ENCODE measurements at regions of chr13 and their contacts with region 1.

Region 1: DNA sequence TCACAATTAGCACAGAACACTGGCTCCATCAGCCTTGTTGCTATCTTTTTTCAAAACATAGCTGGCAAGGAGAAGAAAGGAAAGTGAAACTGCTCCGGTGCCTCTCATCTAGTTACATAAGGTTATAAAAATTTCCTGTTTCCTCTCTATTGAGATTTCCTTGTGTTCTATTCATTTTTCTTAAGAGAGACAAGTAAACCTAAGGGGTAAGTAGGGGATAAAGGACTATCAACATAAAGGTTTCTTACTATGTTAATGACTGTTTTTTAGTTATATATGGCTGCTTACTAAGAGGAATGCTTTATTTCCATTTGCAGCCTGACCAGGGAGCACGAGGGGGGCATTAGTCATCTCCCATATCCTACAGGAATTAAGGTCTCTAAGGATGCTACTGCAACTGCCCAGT is 73.2 kb upstream of the MLNR start:
- DNase-seq: peak in 7 of 9 donors; percentile 39 to 72 (median 57)
- ATAC-seq: peak; percentile 73
- H3K4me3 ChIP-seq: peak overlapping the region; percentile 54
- H3K4me3 Mint-ChIP-seq: peak overlapping the region; percentile 73 to 94 (median 86)
- H3K27ac ChIP-seq: peak overlapping the region; percentile 69
- H3K27ac Mint-ChIP-seq: peak overlapping the region; percentile 86 to 98 (median 96)
- H3K4me1 ChIP-seq: peaks cover 4 to 14% of the 10 kb centered on the region in 2 donors
- H3K4me1 Mint-ChIP-seq: peaks cover 17 to 70% (median 58%) of the 10 kb centered on the region in 7 donors
- H3K27me3 ChIP-seq: no peaks in the 10 kb centered on the region
- H3K27me3 Mint-ChIP-seq: no peaks in the 10 kb centered on the region

Region 2: GRCh38 chr13:49110122-49110912 is 36.6 kb before region 1 on chr13:
- CTCF ChIA-PET with region 1: no interaction called
- POLR2A ChIA-PET with region 1: interaction called, 4 read pairs
- intact Hi-C with region 1: loop called (anchors 1 to 2 kb)
- DNase-seq: peak; percentile 36 to 76 (median 68)
- ATAC-seq: peak; percentile 82
- H3K4me3 ChIP-seq: peak overlapping the region; percentile 75
- H3K4me3 Mint-ChIP-seq: peak overlapping the region; percentile 79 to 94 (median 90)
- H3K27ac ChIP-seq: peak overlapping the region; percentile 80
- H3K27ac Mint-ChIP-seq: peak overlapping the region; percentile 79 to 91 (median 90)
- H3K4me1 ChIP-seq: peaks cover 11 to 25% of the 10 kb centered on the region in 2 donors
- H3K4me1 Mint-ChIP-seq: peaks cover 16 to 48% (median 30%) of the 10 kb centered on the region in 7 donors
- H3K27me3 ChIP-seq: no peaks in the 10 kb centered on the region
- H3K27me3 Mint-ChIP-seq: no peaks in the 10 kb centered on the region

Region 3: DNA sequence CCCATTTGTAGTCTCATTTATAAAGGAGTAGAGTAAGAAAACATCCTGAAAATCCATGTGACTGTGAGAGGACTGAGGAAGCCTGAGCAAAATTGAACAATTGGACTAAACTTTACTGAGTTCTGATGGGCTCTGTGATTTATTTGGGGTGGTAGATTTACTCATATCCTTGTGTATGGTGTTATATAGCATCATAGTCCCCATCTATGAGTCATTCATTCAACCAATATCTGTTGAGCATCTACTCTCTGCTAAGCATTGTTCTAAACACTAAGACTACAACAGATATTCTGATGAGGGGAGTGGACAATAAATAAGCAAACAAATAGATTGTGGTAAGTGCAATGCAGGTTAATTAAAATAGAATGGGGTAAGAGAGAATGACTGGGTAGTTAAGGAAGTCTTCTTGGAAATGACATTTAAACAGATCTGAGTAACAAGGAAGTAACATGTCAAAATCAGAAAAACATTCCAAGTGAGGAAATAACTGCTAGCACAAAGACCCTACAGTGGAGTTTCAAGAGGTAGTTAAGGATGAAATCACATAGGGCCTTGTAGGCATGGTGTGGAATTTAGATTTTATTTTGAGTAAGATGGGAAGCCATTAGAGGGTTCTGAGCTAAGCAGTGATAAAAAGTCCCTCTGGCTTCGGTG is 36.8 kb after region 1 on chr13:
- CTCF ChIA-PET with region 1: no interaction called
- POLR2A ChIA-PET with region 1: no interaction called
- intact Hi-C with region 1: loop called in 1 of 2 experiments (anchors 5 kb)
- DNase-seq: no peak
- ATAC-seq: no peak
- H3K4me3 ChIP-seq: no peak overlapping the region
- H3K4me3 Mint-ChIP-seq: no peak overlapping the region
- H3K27ac ChIP-seq: no peak overlapping the region
- H3K27ac Mint-ChIP-seq: no peak overlapping the region
- H3K4me1 ChIP-seq: no peaks in the 10 kb centered on the region
- H3K4me1 Mint-ChIP-seq: peaks cover 0 to 16% (median 0%) of the 10 kb centered on the region in 7 donors
- H3K27me3 ChIP-seq: no peaks in the 10 kb centered on the region
- H3K27me3 Mint-ChIP-seq: no peaks in the 10 kb centered on the region

Region 4: DNA sequence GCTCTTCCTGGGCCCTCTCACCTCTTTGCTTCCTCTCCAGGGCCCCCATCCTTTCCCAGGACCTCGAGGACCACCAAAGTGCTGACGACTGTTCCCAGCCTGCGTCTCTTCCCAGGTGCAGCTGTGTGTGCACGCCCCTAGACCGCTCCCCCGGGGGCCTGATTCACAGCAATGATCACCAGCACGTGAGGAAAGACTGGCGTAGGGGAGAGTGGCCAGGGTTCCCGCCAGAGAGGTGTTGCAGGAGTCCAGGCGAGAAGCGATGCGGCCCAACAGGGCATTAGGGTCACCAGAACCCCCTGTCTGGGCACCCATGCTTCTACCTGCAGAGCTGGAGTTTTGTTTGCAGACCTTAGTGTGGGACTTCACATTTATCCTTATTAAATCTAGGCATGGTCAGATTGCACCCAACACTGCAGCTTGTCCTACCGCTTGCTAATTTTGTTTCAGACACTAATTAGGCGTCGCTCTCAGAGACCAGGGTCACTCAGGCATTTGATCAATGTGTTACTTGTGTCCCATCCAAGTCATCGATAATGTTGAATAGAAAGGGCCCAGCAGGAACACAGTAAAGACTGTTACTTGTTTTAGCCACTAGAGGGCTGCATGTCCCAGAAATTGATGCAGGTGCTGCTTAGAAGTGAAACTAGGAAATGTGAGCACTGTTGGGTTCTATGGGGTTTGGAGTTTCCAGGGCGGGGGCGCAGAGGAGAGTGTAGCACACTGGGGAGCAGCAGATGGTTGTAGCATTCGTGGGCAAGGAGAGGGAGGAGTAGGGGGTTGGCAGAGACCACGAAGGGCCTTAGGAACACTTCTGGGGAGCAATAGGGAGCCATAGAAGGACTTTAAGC is 154.0 kb after region 1 on chr13:
- CTCF ChIA-PET with region 1: no interaction called
- POLR2A ChIA-PET with region 1: no interaction called
- intact Hi-C with region 1: no loop called
- DNase-seq: peak in 8 of 9 donors; percentile 67 to 82 (median 75)
- ATAC-seq: peak; percentile 96
- H3K4me3 ChIP-seq: peak overlapping the region; percentile 67
- H3K4me3 Mint-ChIP-seq: peak overlapping the region; percentile 63 to 90 (median 80)
- H3K27ac ChIP-seq: no peak overlapping the region
- H3K27ac Mint-ChIP-seq: peak overlapping the region; percentile 16 to 82 (median 71)
- H3K4me1 ChIP-seq: no peaks in the 10 kb centered on the region
- H3K4me1 Mint-ChIP-seq: peaks cover 8 to 28% (median 14%) of the 10 kb centered on the region in 7 donors
- H3K27me3 ChIP-seq: no peaks in the 10 kb centered on the region
- H3K27me3 Mint-ChIP-seq: no peaks in the 10 kb centered on the region